Cardiac septum (tissue), 1 donor: ENCODE measurements at regions of chr18 and their contacts with region 1.

Region 1: GRCh38 chr18:13381944-13382365 is 163.4 kb downstream of the LDLRAD4 start:
- DNase-seq: peak; percentile 77

Region 2: GRCh38 chr18:13425462-13426133 is 43.6 kb after region 1 on chr18:
- intact Hi-C with region 1: loop called (anchors 5 kb)
- DNase-seq: no peak